ENCODE measurements at regions of chr10 and their contacts with region 1.

Region 1: GRCh38 chr10:103367782-103368518 is at the start of gene TAF5:
- DNase-seq: peak; percentile 83 to 96
- ATAC-seq: peak; percentile 76 to 91 (median 77)
- H3K4me3 ChIP-seq: peak within 1 kb of the TSS; percentile 67
- H3K4me3 Mint-ChIP-seq: peak within 1 kb of the TSS; percentile 97
- H3K27ac ChIP-seq: peak within 1 kb of the TSS; percentile 69
- H3K27ac Mint-ChIP-seq: peak within 1 kb of the TSS; percentile 89 to 95
- H3K4me1 ChIP-seq: peaks cover 18% of the 10 kb centered on the region
- H3K4me1 Mint-ChIP-seq: peaks cover 19 to 22% of the 10 kb centered on the region in 2 donors
- H3K27me3 ChIP-seq: no peaks in the 10 kb centered on the region
- H3K27me3 Mint-ChIP-seq: no peaks in the 10 kb centered on the region
- CTCF ChIP-seq: no peak
- total RNA-seq, gene TAF5: 3.6 to 8.8 (median 6.3) TPM

Region 2: GRCh38 chr10:103350501-103351260 is 17.3 kb before region 1 on chr10 and contains the start of gene PCGF6:
- intact Hi-C with region 1: loop called (anchors 2 kb)
- DNase-seq: peak; percentile 67 to 82
- ATAC-seq: peak; percentile 81 to 88 (median 84)
- H3K4me3 ChIP-seq: peak within 1 kb of the TSS; percentile 70
- H3K4me3 Mint-ChIP-seq: peak within 1 kb of the TSS; percentile 89
- H3K27ac ChIP-seq: peak within 1 kb of the TSS; percentile 49
- H3K27ac Mint-ChIP-seq: peak within 1 kb of the TSS; percentile 69 to 91
- H3K4me1 ChIP-seq: peaks cover 10% of the 10 kb centered on the region
- H3K4me1 Mint-ChIP-seq: peaks cover 0 to 5% of the 10 kb centered on the region in 2 donors
- H3K27me3 ChIP-seq: no peaks in the 10 kb centered on the region
- H3K27me3 Mint-ChIP-seq: no peaks in the 10 kb centered on the region
- CTCF ChIP-seq: no peak
- total RNA-seq, gene PCGF6: 5.1 to 8.1 (median 7.1) TPM

Region 3: DNA sequence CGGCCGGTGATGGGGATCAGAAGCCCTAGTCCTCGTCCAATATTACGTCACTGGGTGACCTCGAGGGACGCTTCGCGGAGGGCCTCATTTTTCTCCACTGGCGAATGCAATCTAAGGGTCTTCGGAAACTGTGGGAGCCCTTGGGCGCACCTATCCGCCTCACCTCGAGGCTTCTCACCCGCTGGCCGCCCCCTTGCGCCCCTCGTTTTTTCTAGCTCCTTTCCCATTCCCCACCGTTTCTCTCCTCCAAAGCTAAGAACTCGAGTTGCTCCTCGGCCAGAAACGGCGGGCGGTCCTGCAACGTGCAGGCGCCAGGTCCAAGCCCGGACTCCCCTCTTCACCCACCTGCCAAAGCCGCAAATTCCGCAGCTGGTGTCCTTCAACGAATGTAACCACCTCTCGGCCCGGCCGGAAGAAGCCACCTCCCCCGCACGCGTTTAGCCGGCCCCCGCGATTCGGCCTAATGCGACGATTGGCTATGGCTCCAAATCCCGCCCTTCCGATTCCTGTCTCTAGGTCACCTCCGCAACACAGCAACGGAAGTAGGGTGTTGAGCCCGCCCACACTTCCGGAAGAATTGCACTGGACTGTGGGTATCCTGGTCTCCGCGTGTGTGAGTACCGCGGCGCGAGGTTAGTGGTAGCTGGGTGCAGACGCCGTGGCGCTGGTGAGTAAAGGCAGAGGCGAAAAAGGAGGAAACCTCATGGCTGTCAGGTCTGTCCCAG is 28.3 kb after region 1 on chr10 and contains the starts of genes ATP5MK and PDCD11:
- intact Hi-C with region 1: loop called (anchors 1 kb)
- DNase-seq: peak; percentile 91 to 97
- ATAC-seq: peak; percentile 97 to 99 (median 99)
- H3K4me3 ChIP-seq: peak within 1 kb of the TSS; percentile 82
- H3K4me3 Mint-ChIP-seq: peak within 1 kb of the TSS; percentile 99
- H3K27ac ChIP-seq: peak within 1 kb of the TSS; percentile 60
- H3K27ac Mint-ChIP-seq: peak within 1 kb of the TSS; percentile 96 to 98
- H3K4me1 ChIP-seq: peaks cover 20% of the 10 kb centered on the region
- H3K4me1 Mint-ChIP-seq: peaks cover 43 to 45% of the 10 kb centered on the region in 2 donors
- H3K27me3 ChIP-seq: no peaks in the 10 kb centered on the region
- H3K27me3 Mint-ChIP-seq: no peaks in the 10 kb centered on the region
- CTCF ChIP-seq: no peak
- total RNA-seq, gene ATP5MK: 121 to 157 (median 154) TPM
- total RNA-seq, gene PDCD11: 25.5 to 30.9 (median 29.5) TPM